Activated T-helper 1 cell treated with anti-CD3 and anti-CD28 coated beads, Interleukin-12 subunit alpha, Interleukin-12 subunit beta, Interleukin-2, Interleukin-4 antibody, amounts not matched to agents 30 ng/mL and 10 ng/mL and 1 ng/mL, durations not matched to agents 14 hours and 24 hours and 36 hours (primary cell): ENCODE measurements at regions of chr13 and their contacts with region 1.

Region 1: GRCh38 chr13:42405665-42406390 is 133.9 kb downstream of the AKAP11 start:
- DNase-seq: no peak
- H3K4me3 Mint-ChIP-seq: peak overlapping the region; percentile 60
- H3K27ac Mint-ChIP-seq: peak overlapping the region; percentile 96
- H3K4me1 Mint-ChIP-seq: peaks cover 60% of the 10 kb centered on the region
- H3K27me3 Mint-ChIP-seq: no peaks in the 10 kb centered on the region

Region 2: DNA sequence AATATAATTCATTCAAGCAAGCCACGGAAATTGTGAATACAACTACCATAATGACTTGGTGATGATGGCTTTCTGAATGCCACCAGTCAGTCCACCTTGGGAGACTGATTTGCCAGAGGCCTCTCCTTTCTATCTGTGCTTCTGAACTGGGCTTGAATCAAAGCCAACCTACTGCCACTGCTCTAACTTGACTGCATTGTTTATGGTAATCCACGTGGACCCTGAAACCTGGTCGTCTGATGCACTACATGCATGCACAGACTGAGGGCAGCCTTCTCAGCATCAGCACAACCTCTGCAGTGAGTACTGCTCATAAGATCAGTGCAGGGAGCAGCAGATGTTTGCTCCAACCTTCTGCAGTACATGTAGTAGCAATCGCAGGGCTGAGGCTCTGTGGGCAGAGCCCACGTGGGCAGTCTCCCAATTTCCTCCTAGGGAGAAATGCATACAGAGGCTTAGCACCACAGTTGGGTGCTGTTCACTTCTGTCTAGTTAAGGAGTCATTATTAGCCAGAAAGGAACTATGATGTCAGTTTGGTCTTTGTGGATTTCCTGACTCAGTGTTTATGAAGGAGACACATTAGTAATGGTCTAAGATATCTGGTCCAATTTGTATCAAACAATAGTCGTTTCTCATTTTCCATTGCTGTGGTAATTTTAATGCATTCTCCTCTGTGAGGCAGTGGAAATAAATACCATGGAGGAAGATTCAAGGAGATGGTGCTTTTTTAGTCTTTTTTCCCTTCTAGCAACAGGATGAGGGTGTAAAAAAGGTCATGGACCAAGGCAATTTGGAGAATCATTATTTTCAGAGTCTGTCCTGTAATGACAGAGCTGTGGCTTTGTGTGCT is 51.4 kb before region 1 on chr13:
- intact Hi-C with region 1: loop called (anchors 1 kb)
- DNase-seq: no peak
- H3K4me3 Mint-ChIP-seq: peak overlapping the region; percentile 72
- H3K27ac Mint-ChIP-seq: peak overlapping the region; percentile 99
- H3K4me1 Mint-ChIP-seq: peaks cover 68% of the 10 kb centered on the region
- H3K27me3 Mint-ChIP-seq: peaks cover 1% of the 10 kb centered on the region

Region 3: GRCh38 chr13:42377640-42378382 is 28.0 kb before region 1 on chr13:
- intact Hi-C with region 1: loop called (anchors 1 kb)
- DNase-seq: peak; percentile 68
- H3K4me3 Mint-ChIP-seq: peak overlapping the region; percentile 38
- H3K27ac Mint-ChIP-seq: peak overlapping the region; percentile 89
- H3K4me1 Mint-ChIP-seq: peaks cover 82% of the 10 kb centered on the region
- H3K27me3 Mint-ChIP-seq: no peaks in the 10 kb centered on the region

Region 4: DNA sequence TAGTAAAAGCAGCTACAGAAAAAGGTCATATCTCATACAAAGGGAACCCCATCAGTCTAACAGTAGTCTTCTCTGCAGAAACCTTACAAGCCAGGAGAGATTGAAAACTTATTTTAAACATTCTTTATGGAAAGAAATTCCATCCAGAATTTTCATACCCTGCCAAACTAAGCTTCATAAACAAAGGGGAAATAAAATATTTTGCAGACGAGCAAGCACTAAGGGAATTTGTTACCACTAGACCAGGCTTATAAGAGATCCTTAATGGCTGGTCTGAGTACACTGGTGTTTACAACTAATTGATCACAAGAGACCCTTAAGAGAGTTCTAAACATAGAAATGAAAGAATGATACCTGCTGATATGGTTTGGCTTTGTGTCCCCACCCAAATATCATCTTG is 39.5 kb after region 1 on chr13:
- intact Hi-C with region 1: loop called (anchors 5 kb)
- DNase-seq: no peak
- H3K4me3 Mint-ChIP-seq: no peak overlapping the region
- H3K27ac Mint-ChIP-seq: no peak overlapping the region
- H3K4me1 Mint-ChIP-seq: peaks cover 10% of the 10 kb centered on the region
- H3K27me3 Mint-ChIP-seq: peaks cover 2% of the 10 kb centered on the region